ENCODE measurements at regions of chr5 and their contacts with region 1.

Region 1: GRCh38 chr5:172569861-172570558 is 71.1 kb upstream of the NEURL1B start:
- DNase-seq: no peak
- H3K4me3 ChIP-seq: no peak overlapping the region
- H3K27ac ChIP-seq: peak overlapping the region; percentile 27 to 90 (median 64)
- H3K4me1 ChIP-seq: peaks cover 0 to 41% (median 28%) of the 10 kb centered on the region in 4 donors
- H3K27me3 ChIP-seq: no peaks in the 10 kb centered on the region
- CTCF ChIP-seq: no peak
- EP300 ChIP-seq: no peak
- POLR2A ChIP-seq: no peak

Region 2: GRCh38 chr5:172429201-172429940 is 140.6 kb before region 1 on chr5:
- intact Hi-C with region 1: no loop called
- DNase-seq: peak; percentile 84
- H3K4me3 ChIP-seq: no peak overlapping the region
- H3K27ac ChIP-seq: peak overlapping the region; percentile 76 to 96 (median 90)
- H3K4me1 ChIP-seq: peaks cover 0 to 70% (median 56%) of the 10 kb centered on the region in 4 donors
- H3K27me3 ChIP-seq: no peaks in the 10 kb centered on the region
- CTCF ChIP-seq: no peak
- EP300 ChIP-seq: peak in 1 of 4 donors; percentile 26
- POLR2A ChIP-seq: no peak

Region 3: DNA sequence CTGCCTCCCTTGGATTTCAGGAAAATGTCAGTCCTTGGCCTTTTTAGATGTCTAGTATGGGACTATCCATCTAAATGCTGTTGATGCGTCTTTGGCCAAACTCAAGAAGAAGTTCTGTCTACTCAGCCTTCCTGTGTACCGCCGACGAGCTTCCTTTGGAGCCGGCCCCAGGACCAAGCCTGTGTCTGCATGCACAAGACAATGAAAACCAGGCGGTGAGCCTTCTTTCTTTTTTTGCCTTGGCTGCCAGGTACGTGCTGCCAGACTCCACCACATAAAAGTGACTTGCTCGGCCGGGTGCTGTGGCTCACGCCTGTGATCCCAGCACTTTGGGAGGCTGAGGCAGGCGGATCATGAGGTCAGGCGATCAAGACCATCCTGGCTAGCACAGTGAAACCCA is 65.0 kb after region 1 on chr5:
- intact Hi-C with region 1: loop called (anchors 2 kb)
- DNase-seq: no peak
- H3K4me3 ChIP-seq: no peak overlapping the region
- H3K27ac ChIP-seq: no peak overlapping the region
- H3K4me1 ChIP-seq: peaks cover 0 to 3% (median under 1%) of the 10 kb centered on the region in 4 donors
- H3K27me3 ChIP-seq: no peaks in the 10 kb centered on the region
- CTCF ChIP-seq: no peak
- EP300 ChIP-seq: no peak
- POLR2A ChIP-seq: no peak

Measured in sigmoid colon (tissue), 7 donors.